Breast epithelium (tissue), 4 donors: ENCODE measurements at regions of chr13 and their contacts with region 1.

Region 1: GRCh38 chr13:78712831-78713230 is 53.9 kb upstream of the OBI1 start:
- DNase-seq: no peak
- H3K4me3 ChIP-seq: no peak overlapping the region
- H3K27ac ChIP-seq: no peak overlapping the region
- H3K4me1 ChIP-seq: no peaks in the 10 kb centered on the region
- H3K27me3 ChIP-seq: no peaks in the 10 kb centered on the region
- CTCF ChIP-seq: no peak
- POLR2A ChIP-seq: no peak

Region 2: GRCh38 chr13:78376033-78376432 is 336.8 kb before region 1 on chr13:
- intact Hi-C with region 1: loop called (anchors 5 kb)
- DNase-seq: no peak
- H3K4me3 ChIP-seq: no peak overlapping the region
- H3K27ac ChIP-seq: no peak overlapping the region
- H3K4me1 ChIP-seq: no peaks in the 10 kb centered on the region
- H3K27me3 ChIP-seq: no peaks in the 10 kb centered on the region
- CTCF ChIP-seq: no peak
- POLR2A ChIP-seq: no peak

Region 3: GRCh38 chr13:78806457-78806856 is 93.6 kb after region 1 on chr13:
- intact Hi-C with region 1: no loop called
- DNase-seq: no peak
- H3K4me3 ChIP-seq: no peak overlapping the region
- H3K27ac ChIP-seq: no peak overlapping the region
- H3K4me1 ChIP-seq: no peaks in the 10 kb centered on the region
- H3K27me3 ChIP-seq: no peaks in the 10 kb centered on the region
- CTCF ChIP-seq: no peak
- POLR2A ChIP-seq: no peak

Region 4: GRCh38 chr13:79051472-79051871 is 338.6 kb after region 1 on chr13:
- intact Hi-C with region 1: no loop called
- DNase-seq: no peak
- H3K4me3 ChIP-seq: no peak overlapping the region
- H3K27ac ChIP-seq: no peak overlapping the region
- H3K4me1 ChIP-seq: no peaks in the 10 kb centered on the region
- H3K27me3 ChIP-seq: no peaks in the 10 kb centered on the region
- CTCF ChIP-seq: no peak
- POLR2A ChIP-seq: no peak